BJ (cell line): ENCODE measurements at regions of chr2 and their contacts with region 1.

Region 1: DNA sequence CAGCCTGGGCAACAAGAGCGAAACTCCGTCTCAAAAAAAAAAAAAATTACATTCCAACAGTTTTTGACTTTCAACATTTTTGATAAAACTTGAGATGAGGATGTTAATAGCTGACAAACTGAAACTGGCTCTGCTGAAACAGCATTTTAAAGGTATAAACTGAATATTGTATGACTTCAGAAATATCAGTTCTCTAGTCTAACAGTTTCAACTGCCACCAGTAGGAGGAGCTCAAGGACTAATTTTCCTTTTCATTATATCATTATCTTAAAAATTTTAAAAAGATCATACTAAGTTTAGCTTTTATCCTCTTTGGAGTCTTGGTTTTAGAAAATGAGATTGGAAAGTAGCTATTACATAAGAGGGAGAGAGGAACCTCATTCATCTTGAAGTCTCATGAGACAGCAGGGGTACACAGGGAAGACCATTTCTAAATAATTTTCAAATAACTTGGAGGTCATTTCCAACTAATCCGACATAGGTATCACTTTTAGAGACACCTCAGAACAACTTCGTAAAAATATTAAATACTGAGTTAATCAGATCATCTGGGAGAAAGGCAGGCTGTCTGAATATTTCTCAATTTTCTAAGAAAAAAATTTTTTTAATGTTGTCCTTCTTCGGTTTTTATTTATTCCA is 37.6 kb upstream of the MCM6 start:
- DNase-seq: no peak
- H3K4me3 ChIP-seq: no peak overlapping the region
- H3K27me3 ChIP-seq: no peaks in the 10 kb centered on the region
- CTCF ChIP-seq: peak; percentile 68

Region 2: GRCh38 chr2:135202756-135203155 is 711.1 kb before region 1 on chr2:
- CTCF ChIA-PET with region 1: no interaction called
- POLR2A ChIA-PET with region 1: no interaction called
- DNase-seq: no peak
- H3K4me3 ChIP-seq: no peak overlapping the region
- H3K27me3 ChIP-seq: no peaks in the 10 kb centered on the region
- CTCF ChIP-seq: no peak

Region 3: DNA sequence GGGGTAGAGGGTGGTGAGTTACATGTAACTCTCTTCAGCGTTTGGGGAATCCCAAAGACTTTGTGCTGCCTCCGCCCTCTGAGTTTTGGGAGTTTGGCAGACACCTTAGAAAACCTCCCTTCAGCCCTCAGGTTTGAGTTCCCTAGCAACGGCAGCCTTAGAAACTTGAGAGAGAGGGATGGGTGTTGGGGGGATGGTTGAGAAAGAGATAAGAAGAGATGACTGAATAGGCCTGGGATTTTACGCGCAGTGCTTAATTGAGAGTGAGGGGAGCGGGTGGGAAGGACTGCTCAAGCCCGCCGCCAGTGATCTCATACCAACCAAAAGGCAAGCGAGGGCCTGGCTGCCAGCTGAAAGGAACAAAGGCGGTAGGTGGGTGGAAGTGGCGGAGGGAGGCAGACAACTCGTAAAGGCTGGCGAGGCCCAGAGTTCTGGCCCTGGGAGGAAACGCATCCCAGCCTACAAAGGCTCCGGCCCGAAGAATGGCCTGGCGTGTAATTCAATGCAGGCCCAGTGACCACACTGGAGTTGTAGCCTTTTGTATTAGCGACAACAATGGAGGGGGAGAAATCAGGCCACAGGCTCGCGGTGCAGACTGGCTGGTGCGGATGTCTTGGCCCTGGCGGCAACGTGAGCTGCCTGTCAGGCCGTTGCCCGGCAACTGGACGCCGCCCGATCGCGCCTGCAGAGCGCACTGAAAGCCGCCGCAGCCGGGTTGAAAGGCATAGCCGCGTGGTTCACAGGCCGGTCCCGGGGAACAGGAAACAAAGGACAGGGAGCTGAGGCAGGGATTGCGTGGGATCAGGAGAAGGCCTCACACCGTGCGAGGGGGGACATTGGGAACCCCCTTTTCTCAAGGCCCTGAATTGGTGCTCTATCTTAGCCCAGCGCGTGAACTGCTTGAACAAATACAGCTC is 111.5 kb after region 1 on chr2:
- CTCF ChIA-PET with region 1: no interaction called
- POLR2A ChIA-PET with region 1: no interaction called
- DNase-seq: peak; percentile 11
- H3K4me3 ChIP-seq: peak overlapping the region; percentile 11; the same call in 1 of the 2 replicates
- H3K27me3 ChIP-seq: peaks cover 2% of the 10 kb centered on the region; the same call in 1 of the 2 replicates
- CTCF ChIP-seq: no peak

Region 4: GRCh38 chr2:136376798-136377211 is 463.0 kb after region 1 on chr2:
- CTCF ChIA-PET with region 1: interaction called, 15 read pairs
- POLR2A ChIA-PET with region 1: no interaction called
- DNase-seq: no peak
- H3K4me3 ChIP-seq: no peak overlapping the region
- H3K27me3 ChIP-seq: no peaks in the 10 kb centered on the region
- CTCF ChIP-seq: no peak

Region 5: DNA sequence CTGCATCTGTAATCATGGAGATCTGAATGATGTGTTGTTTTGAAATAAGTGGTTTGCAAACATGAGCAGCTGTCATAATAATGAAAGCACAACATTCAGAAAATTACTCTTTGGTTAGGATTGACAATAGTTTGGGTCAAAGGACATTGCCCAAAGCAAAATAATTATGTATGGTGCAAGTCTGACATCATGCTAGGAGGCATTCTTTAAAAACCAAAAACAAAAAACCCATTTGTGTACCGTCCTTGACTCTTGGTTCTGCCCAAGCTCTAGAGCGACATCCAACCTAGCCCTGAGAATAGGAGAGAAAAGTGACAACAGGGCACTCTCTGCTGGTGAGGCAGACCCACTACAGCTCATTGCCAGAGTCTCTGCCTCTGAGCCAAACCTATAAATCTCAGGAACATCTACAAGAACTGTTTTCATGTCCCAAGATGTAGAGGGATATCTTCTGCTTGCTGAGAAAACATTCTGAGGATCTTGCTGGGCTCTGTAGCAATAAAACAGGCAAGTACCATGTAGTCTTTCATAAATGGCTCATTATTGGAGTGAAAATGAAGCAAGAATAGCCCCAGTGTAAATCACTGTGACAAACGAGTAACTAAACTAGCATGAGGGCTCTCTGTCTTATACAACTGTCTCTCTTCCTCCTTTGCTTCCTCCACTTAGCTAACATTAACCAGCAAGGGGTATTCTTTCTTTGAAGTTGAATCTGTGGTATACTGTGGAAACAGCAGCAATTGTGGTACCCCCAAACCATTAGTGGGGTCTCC is 470.9 kb after region 1 on chr2:
- CTCF ChIA-PET with region 1: interaction called, 17 read pairs
- POLR2A ChIA-PET with region 1: no interaction called
- DNase-seq: no peak
- H3K4me3 ChIP-seq: no peak overlapping the region
- H3K27me3 ChIP-seq: no peaks in the 10 kb centered on the region
- CTCF ChIP-seq: peak; percentile 46